CD8-positive, alpha-beta T cell (primary cell): ENCODE measurements at regions of chr21 and their contacts with region 1.

Region 1: DNA sequence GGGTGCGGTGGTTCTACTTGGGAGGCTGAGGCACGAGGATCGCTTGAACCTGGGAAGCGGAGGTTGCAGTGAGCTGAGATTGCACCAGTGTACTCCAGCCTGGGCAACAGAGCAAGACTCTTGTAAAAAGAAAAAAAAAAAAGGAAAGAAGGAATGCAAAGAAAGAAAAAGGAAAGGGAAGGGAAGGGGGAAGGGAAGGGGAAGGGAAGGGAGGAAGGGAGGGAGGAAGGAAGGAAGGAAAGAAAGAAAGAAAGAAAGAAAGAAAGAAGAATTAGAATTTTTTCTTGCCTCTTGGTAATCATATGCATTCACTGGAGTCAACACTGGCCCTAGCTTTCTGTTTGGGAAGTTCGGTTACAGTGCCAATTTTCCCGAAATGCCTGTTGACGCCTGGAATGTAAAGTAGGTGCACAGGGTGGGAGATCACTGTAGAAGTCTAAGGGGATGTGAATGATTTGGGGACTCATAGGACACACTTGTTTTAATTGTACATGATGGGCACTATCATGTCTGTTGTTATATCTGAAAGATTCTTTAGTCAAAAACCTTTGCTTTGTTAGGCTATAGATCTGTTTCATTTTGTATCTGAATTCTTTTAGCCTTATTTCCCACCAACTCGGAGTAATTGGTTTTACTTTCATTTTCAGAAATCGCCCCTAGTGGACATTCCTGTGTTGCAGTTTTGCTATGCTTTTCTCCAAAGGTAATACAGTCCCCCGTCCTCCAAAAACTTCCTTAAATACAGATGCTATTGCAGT is 59.8 kb upstream of the MORC3 start:
- DNase-seq: peak in 8 of 9 experiments; percentile 19 to 82 (median 49)
- ATAC-seq: peak; percentile 93
- H3K4me3 ChIP-seq: peak overlapping the region; percentile 53 to 55
- H3K4me3 Mint-ChIP-seq: peak overlapping the region; percentile 86
- H3K27ac ChIP-seq: peak overlapping the region; percentile 53 to 85
- H3K27ac Mint-ChIP-seq: peak overlapping the region; percentile 91
- H3K4me1 ChIP-seq: peaks cover 9% of the 10 kb centered on the region
- H3K4me1 Mint-ChIP-seq: peaks cover 12% of the 10 kb centered on the region
- H3K27me3 ChIP-seq: no peaks in the 10 kb centered on the region
- H3K27me3 Mint-ChIP-seq: no peaks in the 10 kb centered on the region
- CTCF ChIP-seq: peak; percentile 83

Region 2: GRCh38 chr21:36117286-36117741 is 142.9 kb before region 1 on chr21:
- CTCF ChIA-PET with region 1: no interaction called
- POLR2A ChIA-PET with region 1: no interaction called
- intact Hi-C with region 1: no loop called
- DNase-seq: no peak
- ATAC-seq: no peak
- H3K4me3 ChIP-seq: no peak overlapping the region
- H3K4me3 Mint-ChIP-seq: no peak overlapping the region
- H3K27ac ChIP-seq: no peak overlapping the region
- H3K27ac Mint-ChIP-seq: no peak overlapping the region
- H3K4me1 ChIP-seq: peaks cover 37% of the 10 kb centered on the region
- H3K4me1 Mint-ChIP-seq: peaks cover 31% of the 10 kb centered on the region
- H3K27me3 ChIP-seq: no peaks in the 10 kb centered on the region
- H3K27me3 Mint-ChIP-seq: no peaks in the 10 kb centered on the region
- CTCF ChIP-seq: no peak

Region 3: DNA sequence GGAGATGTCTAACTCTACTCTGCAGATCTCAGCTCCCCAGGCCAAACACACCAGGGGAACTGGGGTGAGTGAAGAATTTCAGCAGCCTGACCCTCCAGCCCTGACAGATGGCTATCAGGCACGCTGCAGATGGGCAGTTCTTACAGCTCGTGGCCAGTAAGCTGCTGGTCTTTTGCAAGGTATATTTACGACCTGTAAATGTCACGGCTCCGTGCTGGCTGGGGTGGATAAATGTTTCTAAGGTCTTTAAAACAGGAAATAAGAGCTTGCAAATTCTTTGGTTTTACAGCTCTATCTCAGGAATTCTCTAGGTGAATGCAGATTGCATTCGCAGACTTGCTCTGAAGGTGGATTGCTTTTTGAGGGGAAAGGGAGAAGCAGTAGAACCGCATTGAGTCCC is 93.5 kb before region 1 on chr21:
- CTCF ChIA-PET with region 1: no interaction called
- POLR2A ChIA-PET with region 1: no interaction called
- intact Hi-C with region 1: no loop called
- DNase-seq: no peak
- ATAC-seq: no peak
- H3K4me3 ChIP-seq: no peak overlapping the region
- H3K4me3 Mint-ChIP-seq: no peak overlapping the region
- H3K27ac ChIP-seq: no peak overlapping the region
- H3K27ac Mint-ChIP-seq: no peak overlapping the region
- H3K4me1 ChIP-seq: no peaks in the 10 kb centered on the region
- H3K4me1 Mint-ChIP-seq: peaks cover 10% of the 10 kb centered on the region
- H3K27me3 ChIP-seq: no peaks in the 10 kb centered on the region
- H3K27me3 Mint-ChIP-seq: no peaks in the 10 kb centered on the region
- CTCF ChIP-seq: no peak

Region 4: DNA sequence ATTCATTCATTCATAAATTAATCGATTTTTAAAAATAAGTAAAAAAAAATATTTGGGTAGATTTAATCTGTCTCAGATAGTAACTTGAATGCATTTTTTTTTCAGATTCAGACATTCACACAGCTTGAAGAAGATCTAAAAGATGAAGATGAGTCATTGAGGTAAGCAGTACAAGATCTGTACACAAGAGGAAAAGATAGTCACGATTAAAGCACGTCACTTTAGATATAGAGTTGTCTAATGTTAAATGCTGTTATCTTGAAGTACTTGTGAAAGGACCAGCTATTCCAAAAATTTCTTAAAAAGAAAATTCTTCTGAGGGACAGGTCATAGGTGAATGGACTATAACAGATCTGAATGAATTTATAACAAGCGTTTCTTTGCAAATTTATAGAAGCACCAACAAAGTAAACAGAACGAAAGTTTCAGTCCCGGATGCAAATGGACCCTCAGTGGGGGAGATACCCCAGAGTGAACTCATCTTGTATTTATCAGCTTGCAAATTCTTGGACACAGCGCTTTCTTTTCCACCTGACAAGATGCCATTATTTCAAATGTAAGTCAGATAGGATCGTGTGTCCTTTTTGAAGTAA is 28.5 kb after region 1 on chr21:
- CTCF ChIA-PET with region 1: interaction called, 3 read pairs
- POLR2A ChIA-PET with region 1: no interaction called
- intact Hi-C with region 1: loop called in 1 of 2 experiments (anchors 1 kb)
- DNase-seq: peak in 2 of 9 experiments; percentile 29 to 68
- ATAC-seq: peak; percentile 81
- H3K4me3 ChIP-seq: no peak overlapping the region
- H3K4me3 Mint-ChIP-seq: peak overlapping the region; percentile 68
- H3K27ac ChIP-seq: peak overlapping the region; percentile 53 to 66
- H3K27ac Mint-ChIP-seq: peak overlapping the region; percentile 91
- H3K4me1 ChIP-seq: peaks cover 8% of the 10 kb centered on the region
- H3K4me1 Mint-ChIP-seq: peaks cover 18% of the 10 kb centered on the region
- H3K27me3 ChIP-seq: no peaks in the 10 kb centered on the region
- H3K27me3 Mint-ChIP-seq: no peaks in the 10 kb centered on the region
- CTCF ChIP-seq: no peak

Region 5: DNA sequence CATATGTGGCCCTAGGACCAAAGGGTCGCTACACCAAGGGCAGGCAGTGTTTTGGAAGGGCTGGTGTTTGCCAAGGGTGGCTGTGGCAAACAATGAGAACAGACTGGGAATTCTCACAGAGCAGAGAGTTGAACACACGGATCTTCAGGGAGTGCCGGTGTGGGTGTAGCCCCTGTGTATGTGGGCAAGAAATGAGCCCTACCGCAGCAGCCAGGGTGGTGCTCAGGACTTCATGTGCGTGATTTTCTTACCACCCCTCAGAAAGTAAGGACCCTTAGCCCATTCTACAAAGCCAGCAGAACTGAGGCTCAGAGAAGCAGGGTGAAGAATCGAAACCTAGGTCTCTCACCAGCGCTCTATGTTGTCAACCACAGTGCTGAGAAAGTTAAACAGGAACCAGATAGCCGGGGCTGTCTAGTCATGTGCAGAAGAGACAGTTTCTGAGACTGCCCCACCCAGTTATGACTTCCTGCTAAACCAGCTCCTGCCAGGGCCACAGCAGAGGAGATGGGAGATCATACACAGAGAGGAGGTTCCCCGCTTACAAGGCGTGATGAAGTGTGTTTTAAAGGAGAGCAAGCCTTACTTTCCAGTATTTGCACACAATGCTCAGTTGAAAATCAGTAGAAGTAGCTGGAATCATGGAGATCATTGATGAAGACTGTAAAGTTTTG is 37.8 kb after region 1 on chr21:
- CTCF ChIA-PET with region 1: interaction called, 3 read pairs
- POLR2A ChIA-PET with region 1: no interaction called
- intact Hi-C with region 1: loop called in 1 of 2 experiments (anchors 1 kb)
- DNase-seq: peak; percentile 43 to 92 (median 79)
- ATAC-seq: peak; percentile 98
- H3K4me3 ChIP-seq: peak overlapping the region; percentile 43 to 47
- H3K4me3 Mint-ChIP-seq: peak overlapping the region; percentile 85
- H3K27ac ChIP-seq: peak overlapping the region; percentile 72 to 96
- H3K27ac Mint-ChIP-seq: peak overlapping the region; percentile 97
- H3K4me1 ChIP-seq: peaks cover 28% of the 10 kb centered on the region
- H3K4me1 Mint-ChIP-seq: peaks cover 37% of the 10 kb centered on the region
- H3K27me3 ChIP-seq: no peaks in the 10 kb centered on the region
- H3K27me3 Mint-ChIP-seq: no peaks in the 10 kb centered on the region
- CTCF ChIP-seq: no peak

Region 6: DNA sequence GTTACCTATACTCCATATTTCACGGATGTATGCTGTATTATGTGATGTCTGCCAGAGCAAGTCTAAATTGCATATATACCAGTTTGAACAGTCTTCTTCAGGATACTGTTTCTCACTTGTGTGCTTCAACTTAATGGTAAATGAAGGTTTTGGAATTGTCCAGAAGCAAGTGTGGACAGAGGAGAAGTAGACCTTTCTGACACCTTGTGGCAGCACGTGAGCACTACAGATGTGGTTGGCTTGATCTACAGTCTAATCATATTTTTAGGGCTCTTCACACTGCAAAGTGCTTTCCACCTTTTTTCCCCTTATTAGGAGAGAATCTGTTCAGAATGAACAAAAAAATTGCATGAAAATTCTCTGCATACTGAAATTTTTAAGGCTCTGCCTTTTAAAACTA is 70.7 kb after region 1 on chr21:
- CTCF ChIA-PET with region 1: interaction called, 5 read pairs
- POLR2A ChIA-PET with region 1: no interaction called
- intact Hi-C with region 1: loop called (anchors 1 to 2 kb)
- DNase-seq: peak in 7 of 9 experiments; percentile 16 to 75 (median 51)
- ATAC-seq: peak; percentile 92
- H3K4me3 ChIP-seq: no peak overlapping the region
- H3K4me3 Mint-ChIP-seq: no peak overlapping the region
- H3K27ac ChIP-seq: no peak overlapping the region
- H3K27ac Mint-ChIP-seq: peak overlapping the region; percentile 76
- H3K4me1 ChIP-seq: peaks cover 33% of the 10 kb centered on the region
- H3K4me1 Mint-ChIP-seq: peaks cover 51% of the 10 kb centered on the region
- H3K27me3 ChIP-seq: no peaks in the 10 kb centered on the region
- H3K27me3 Mint-ChIP-seq: no peaks in the 10 kb centered on the region
- CTCF ChIP-seq: peak; percentile 86